Left cardiac atrium (tissue), 4 donors: ENCODE measurements at regions of chr15 and their contacts with region 1.

Region 1: DNA sequence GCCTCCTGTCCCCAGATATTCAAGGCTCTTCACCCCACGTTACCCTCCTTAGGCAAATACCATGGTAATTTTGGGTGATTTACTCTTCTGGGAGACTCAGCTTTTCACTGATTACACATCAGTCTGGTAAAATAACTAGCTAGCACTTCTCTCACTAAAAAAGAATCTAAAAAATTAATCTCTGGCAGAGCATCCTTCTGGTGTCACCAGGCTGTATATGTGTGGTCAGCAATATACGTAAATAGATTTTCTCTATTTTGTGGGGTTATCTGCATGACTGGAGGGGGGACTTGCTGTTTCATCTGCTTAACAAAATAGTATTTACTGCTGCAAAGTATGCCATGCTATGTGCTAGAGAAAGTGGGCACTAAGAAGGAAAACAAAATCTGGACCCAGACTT is 45.1 kb downstream of the LRRC28 start:
- DNase-seq: no peak
- ATAC-seq: no peak

Region 2: GRCh38 chr15:99350408-99350807 is 54.0 kb after region 1 on chr15:
- intact Hi-C with region 1: loop called in 1 of 2 experiments (anchors 5 kb)
- DNase-seq: no peak
- ATAC-seq: no peak

Region 3: GRCh38 chr15:99361541-99362185 is 65.3 kb after region 1 on chr15:
- intact Hi-C with region 1: loop called in 1 of 2 experiments (anchors 10 kb)
- DNase-seq: no peak
- ATAC-seq: no peak